ENCODE measurements at regions of chr3 and their contacts with region 1.

Region 1: GRCh38 chr3:33440323-33441232 is at the start of gene UBP1:
- DNase-seq: peak; percentile 100
- ATAC-seq: peak; percentile 89
- H3K4me3 ChIP-seq: peak within 1 kb of the TSS; percentile 84
- H3K27ac ChIP-seq: peak within 1 kb of the TSS; percentile 85
- H3K4me1 ChIP-seq: peaks cover 26% of the 10 kb centered on the region
- H3K27me3 ChIP-seq: no peaks in the 10 kb centered on the region
- CTCF ChIP-seq: no peak
- total RNA-seq, gene UBP1: 49.3 and 57.5 TPM in 2 replicates

Region 2: DNA sequence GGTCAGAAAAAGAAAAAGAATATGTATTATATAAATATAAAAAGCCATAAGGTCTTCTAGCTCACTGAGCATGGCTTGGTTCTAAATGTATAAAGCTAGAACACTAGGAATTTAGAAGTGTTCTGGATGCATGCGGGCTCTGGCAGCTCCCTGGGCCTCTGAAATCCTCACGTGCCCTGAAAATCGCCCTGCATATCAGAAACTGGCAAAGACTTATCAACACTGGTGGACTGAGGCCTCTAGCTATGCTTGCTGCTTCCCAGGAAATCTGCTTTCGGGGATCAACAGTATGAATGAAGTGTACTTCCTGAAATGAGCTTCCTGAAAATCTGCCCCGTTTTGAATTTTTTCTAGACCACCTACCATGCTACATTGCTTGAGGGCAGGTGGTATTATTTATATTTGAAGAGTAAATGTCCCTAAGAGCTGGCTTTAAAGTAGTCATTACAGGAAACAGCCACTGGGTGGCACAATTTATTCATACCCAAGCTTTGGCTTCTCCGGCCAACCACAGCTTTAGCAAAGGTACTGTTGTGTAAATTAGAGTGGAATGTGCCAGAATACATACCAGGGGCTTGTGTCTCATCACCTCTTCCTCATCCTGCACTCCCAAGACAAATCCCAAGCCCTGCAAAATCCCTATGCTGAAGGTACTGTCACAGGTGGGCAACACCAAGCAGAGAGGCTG is 309.1 kb before region 1 on chr3:
- CTCF ChIA-PET with region 1: interaction called, 3 read pairs
- POLR2A ChIA-PET with region 1: no interaction called
- intact Hi-C with region 1: loop called (anchors 5 kb)
- DNase-seq: peak; percentile 85
- ATAC-seq: peak; percentile 83
- H3K4me3 ChIP-seq: no peak overlapping the region
- H3K27ac ChIP-seq: no peak overlapping the region
- H3K4me1 ChIP-seq: 0 out of 2 replicates have a peak, but pooled peaks cover 3% of the 10 kb centered on the region
- H3K27me3 ChIP-seq: no peaks in the 10 kb centered on the region
- CTCF ChIP-seq: peak; percentile 94

Region 3: DNA sequence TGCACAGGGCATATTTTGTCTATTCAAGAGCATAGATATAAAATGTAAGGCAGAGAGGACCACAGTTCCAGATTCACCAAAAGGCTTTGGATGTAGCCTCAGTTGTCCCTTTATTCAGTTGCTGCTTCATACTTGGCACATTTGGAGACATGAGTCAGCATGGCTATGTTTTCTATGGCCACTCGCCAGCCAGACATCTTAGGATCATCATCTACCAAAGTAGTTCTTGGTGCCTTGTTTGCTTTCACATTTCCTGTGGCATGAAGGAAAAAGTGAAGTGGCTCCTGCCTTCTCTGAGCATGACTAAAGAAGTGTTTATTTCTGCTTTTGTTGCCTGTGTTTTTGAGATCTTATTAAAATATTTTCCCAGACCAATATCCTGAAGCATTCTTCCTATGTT is 229.1 kb before region 1 on chr3:
- CTCF ChIA-PET with region 1: no interaction called
- POLR2A ChIA-PET with region 1: no interaction called
- intact Hi-C with region 1: no loop called
- DNase-seq: peak; percentile 95
- ATAC-seq: peak; percentile 95
- H3K4me3 ChIP-seq: no peak overlapping the region
- H3K27ac ChIP-seq: peak overlapping the region; percentile 14
- H3K4me1 ChIP-seq: peaks cover 16% of the 10 kb centered on the region
- H3K27me3 ChIP-seq: peaks cover under 1% of the 10 kb centered on the region; the same call in 1 of the 2 replicates
- CTCF ChIP-seq: no peak

Region 4: GRCh38 chr3:33392703-33393125 is 47.9 kb before region 1 on chr3:
- CTCF ChIA-PET with region 1: no interaction called
- POLR2A ChIA-PET with region 1: no interaction called
- intact Hi-C with region 1: loop called (anchors 1 kb)
- DNase-seq: peak; percentile 97
- ATAC-seq: peak; percentile 98
- H3K4me3 ChIP-seq: no peak overlapping the region
- H3K27ac ChIP-seq: peak overlapping the region; percentile 81
- H3K4me1 ChIP-seq: peaks cover 29% of the 10 kb centered on the region
- H3K27me3 ChIP-seq: no peaks in the 10 kb centered on the region
- CTCF ChIP-seq: no peak

Region 5: DNA sequence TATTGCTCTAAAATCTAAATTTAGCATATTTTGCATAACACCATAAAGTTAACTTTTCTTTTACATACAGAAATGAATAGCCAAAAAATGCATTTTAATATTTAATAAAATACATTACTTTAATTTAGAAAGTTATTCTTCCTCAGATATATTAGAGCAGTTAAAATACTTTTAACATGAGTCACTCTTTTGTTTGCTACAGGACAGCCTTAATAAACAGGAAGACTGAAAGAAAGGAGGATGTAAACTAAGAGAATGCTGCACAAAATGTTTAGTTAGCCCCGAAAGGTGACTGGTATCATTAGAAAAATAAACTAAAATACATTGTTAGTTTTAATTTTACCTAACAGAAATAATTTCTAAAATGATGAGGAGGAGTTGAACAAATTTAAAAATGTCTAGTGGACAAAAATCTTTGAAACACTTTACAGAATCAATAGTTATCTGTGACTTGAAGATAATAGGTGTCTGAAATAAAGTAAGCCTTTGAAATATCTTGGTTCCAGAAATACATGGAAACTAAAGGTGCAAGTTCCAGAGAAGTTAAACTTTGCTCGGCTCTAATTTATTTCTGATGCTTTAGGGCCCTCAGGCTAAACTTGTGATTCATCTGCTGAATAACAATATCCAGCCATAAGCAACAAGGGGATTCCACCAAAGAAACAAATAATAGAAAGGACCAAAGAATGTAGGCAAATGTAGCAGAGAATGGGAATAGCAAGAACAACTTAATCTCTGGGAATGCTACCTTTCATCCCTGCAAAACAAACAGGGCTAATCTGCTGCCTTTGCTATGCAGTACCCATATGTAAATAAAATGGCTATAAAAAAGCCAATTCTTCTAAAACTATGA is 138.0 kb after region 1 on chr3:
- CTCF ChIA-PET with region 1: no interaction called
- POLR2A ChIA-PET with region 1: interaction called, 6 read pairs
- intact Hi-C with region 1: loop called (anchors 1 kb)
- DNase-seq: peak; percentile 90
- ATAC-seq: peak; percentile 66
- H3K4me3 ChIP-seq: peak overlapping the region; percentile 51
- H3K27ac ChIP-seq: peak overlapping the region; percentile 99
- H3K4me1 ChIP-seq: peaks cover 62% of the 10 kb centered on the region
- H3K27me3 ChIP-seq: no peaks in the 10 kb centered on the region
- CTCF ChIP-seq: no peak

Region 6: GRCh38 chr3:33798411-33799201 is 358.0 kb after region 1 on chr3 and contains the start of gene PDCD6IP:
- CTCF ChIA-PET with region 1: no interaction called
- POLR2A ChIA-PET with region 1: interaction called, 6 read pairs
- intact Hi-C with region 1: loop called (anchors 5 kb)
- DNase-seq: peak; percentile 97
- ATAC-seq: peak; percentile 90
- H3K4me3 ChIP-seq: peak within 1 kb of the TSS; percentile 84
- H3K27ac ChIP-seq: peak within 1 kb of the TSS; percentile 86
- H3K4me1 ChIP-seq: peaks cover 41% of the 10 kb centered on the region
- H3K27me3 ChIP-seq: no peaks in the 10 kb centered on the region
- CTCF ChIP-seq: no peak
- total RNA-seq, gene PDCD6IP: 185 and 266 TPM in 2 replicates

Measured in PC-3 (cell line).